ENCODE measurements at regions of chr17 and their contacts with region 1.

Region 1: DNA sequence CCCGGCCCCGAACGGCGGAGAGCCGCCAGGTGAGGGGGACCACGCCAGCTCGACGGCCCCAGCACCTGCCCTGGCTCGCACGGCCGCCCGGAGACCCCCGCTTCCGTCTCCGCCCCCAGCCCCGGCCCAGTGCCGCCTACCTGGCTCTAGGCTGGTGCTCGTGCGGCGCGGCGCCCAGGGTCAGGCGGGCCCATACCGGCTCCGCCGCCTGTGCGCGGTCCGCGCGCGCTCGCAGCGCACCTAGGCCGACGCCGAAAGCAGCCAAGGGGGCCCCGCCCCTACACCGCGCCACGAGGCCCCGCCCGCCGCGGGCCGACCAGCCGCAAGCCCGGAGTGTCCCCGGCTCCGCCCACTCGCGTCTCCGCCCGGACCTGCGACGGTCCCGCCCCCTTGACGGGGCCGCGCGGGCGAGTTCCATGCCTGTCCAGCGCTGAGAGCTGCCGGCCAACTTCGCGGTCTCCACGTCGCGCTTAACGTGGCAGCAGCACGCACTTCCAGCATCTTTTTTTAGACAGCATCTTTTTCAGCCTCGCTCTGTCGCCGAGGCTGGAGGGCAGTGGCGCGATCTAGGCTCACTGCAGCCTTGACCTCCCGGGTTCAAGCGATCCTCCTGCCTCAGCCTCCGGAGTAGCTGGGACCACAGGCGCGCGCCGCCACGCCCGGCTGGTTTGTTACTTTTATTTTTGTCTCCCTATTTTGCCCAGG is at the start of gene SLC25A39:
- DNase-seq: peak; percentile 87 to 99 (median 94)
- ATAC-seq: peak; percentile 91
- H3K4me3 ChIP-seq: peak within 1 kb of the TSS; percentile 98
- H3K4me3 Mint-ChIP-seq: peak within 1 kb of the TSS; percentile 90 to 96 (median 93)
- H3K27ac ChIP-seq: peak within 1 kb of the TSS; percentile 83
- H3K27ac Mint-ChIP-seq: peak within 1 kb of the TSS; percentile 89 to 98 (median 95)
- H3K4me1 ChIP-seq: peaks cover 13 to 17% of the 10 kb centered on the region in 2 donors
- H3K4me1 Mint-ChIP-seq: peaks cover 0 to 38% (median 19%) of the 10 kb centered on the region in 7 donors
- H3K27me3 ChIP-seq: no peaks in the 10 kb centered on the region
- H3K27me3 Mint-ChIP-seq: no peaks in the 10 kb centered on the region
- total RNA-seq, gene SLC25A39: 75.4 to 107 (median 101) TPM

Region 2: DNA sequence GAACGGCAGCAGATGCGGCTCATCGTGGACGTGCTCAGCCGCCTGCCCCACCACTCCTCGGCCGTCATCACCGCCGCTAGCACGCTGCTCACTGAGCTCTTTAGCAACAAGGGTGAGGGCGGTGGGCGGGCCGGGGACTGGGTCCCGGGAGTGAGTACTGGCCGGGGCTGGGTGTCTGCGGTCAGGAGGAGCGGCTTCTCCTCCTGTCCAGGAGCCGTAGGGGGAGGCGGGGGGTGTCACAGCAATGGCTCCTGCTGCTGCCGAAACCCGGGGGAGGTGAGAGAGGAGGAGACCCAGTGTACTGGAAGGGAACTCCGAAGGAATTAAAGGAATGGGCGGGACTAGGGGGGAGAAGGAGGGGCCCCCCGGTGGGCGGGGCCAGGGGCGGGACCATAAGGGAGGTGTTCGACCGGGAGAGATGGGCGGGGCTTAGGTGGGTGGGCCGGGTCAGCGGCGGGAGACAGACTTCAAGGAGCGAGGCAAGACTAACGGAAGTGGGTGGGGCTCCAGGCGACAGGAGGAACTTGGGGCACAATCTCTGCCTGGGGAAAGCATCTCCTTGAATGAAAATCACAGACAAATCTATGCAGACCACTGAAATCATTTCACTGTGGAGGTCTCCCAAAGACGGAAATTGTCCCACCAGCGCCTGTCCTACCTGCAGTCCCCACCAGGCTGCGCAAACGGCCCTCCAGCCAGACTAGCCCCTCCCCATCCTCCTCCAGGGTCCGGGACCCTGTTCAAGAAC is 318.0 kb before region 1 on chr17:
- CTCF ChIA-PET with region 1: no interaction called
- POLR2A ChIA-PET with region 1: no interaction called
- intact Hi-C with region 1: loop called in 1 of 2 experiments (anchors 2 kb)
- DNase-seq: peak; percentile 77 to 95 (median 86)
- ATAC-seq: peak; percentile 96
- H3K4me3 ChIP-seq: peak overlapping the region; percentile 89
- H3K4me3 Mint-ChIP-seq: peak overlapping the region; percentile 86 to 94 (median 90)
- H3K27ac ChIP-seq: peak overlapping the region; percentile 60
- H3K27ac Mint-ChIP-seq: peak overlapping the region; percentile 44 to 88 (median 68)
- H3K4me1 ChIP-seq: peaks cover 19 to 26% of the 10 kb centered on the region in 2 donors
- H3K4me1 Mint-ChIP-seq: peaks cover 16 to 30% (median 25%) of the 10 kb centered on the region in 7 donors
- H3K27me3 ChIP-seq: no peaks in the 10 kb centered on the region
- H3K27me3 Mint-ChIP-seq: peaks cover 0 to 30% (median 4%) of the 10 kb centered on the region in 5 donors

Region 3: GRCh38 chr17:44141717-44142285 is 182.9 kb before region 1 on chr17 and contains the start of gene HROB:
- CTCF ChIA-PET with region 1: no interaction called
- POLR2A ChIA-PET with region 1: no interaction called
- intact Hi-C with region 1: loop called (anchors 1 kb)
- DNase-seq: peak; percentile 96 to 100 (median 98)
- ATAC-seq: peak; percentile 98
- H3K4me3 ChIP-seq: peak within 1 kb of the TSS; percentile 84
- H3K4me3 Mint-ChIP-seq: peak within 1 kb of the TSS; percentile 82 to 89 (median 84)
- H3K27ac ChIP-seq: peak within 1 kb of the TSS; percentile 84
- H3K27ac Mint-ChIP-seq: peak within 1 kb of the TSS; percentile 65 to 91 (median 87)
- H3K4me1 ChIP-seq: peaks cover 0 to 9% of the 10 kb centered on the region in 2 donors
- H3K4me1 Mint-ChIP-seq: peaks cover 0 to 32% (median 12%) of the 10 kb centered on the region in 7 donors
- H3K27me3 ChIP-seq: no peaks in the 10 kb centered on the region
- H3K27me3 Mint-ChIP-seq: peaks cover 0 to 5% (median 0%) of the 10 kb centered on the region in 5 donors
- total RNA-seq, gene HROB: 0.76 to 12.3 (median 2.1) TPM

Region 4: GRCh38 chr17:44210342-44211192 is 114.2 kb before region 1 on chr17:
- CTCF ChIA-PET with region 1: interaction called, 47 read pairs
- POLR2A ChIA-PET with region 1: interaction called, 60 read pairs
- intact Hi-C with region 1: loop called in 1 of 2 experiments (anchors 1 kb)
- DNase-seq: peak; percentile 82 to 97 (median 93)
- ATAC-seq: peak; percentile 99
- H3K4me3 ChIP-seq: no peak overlapping the region
- H3K4me3 Mint-ChIP-seq: peak overlapping the region; percentile 16 to 77 (median 60)
- H3K27ac ChIP-seq: peak overlapping the region; percentile 68
- H3K27ac Mint-ChIP-seq: peak overlapping the region; percentile 52 to 90 (median 81)
- H3K4me1 ChIP-seq: peaks cover 25 to 47% of the 10 kb centered on the region in 2 donors
- H3K4me1 Mint-ChIP-seq: peaks cover 30 to 67% (median 50%) of the 10 kb centered on the region in 7 donors
- H3K27me3 ChIP-seq: no peaks in the 10 kb centered on the region
- H3K27me3 Mint-ChIP-seq: no peaks in the 10 kb centered on the region

Region 5: GRCh38 chr17:44308320-44308818 is 16.4 kb before region 1 on chr17 and contains the start of gene RUNDC3A:
- CTCF ChIA-PET with region 1: no interaction called
- POLR2A ChIA-PET with region 1: interaction called, 7 read pairs
- intact Hi-C with region 1: loop called (anchors 1 kb)
- DNase-seq: peak; percentile 75 to 90 (median 85)
- ATAC-seq: peak; percentile 99
- H3K4me3 ChIP-seq: no peak within 1 kb of the TSS
- H3K4me3 Mint-ChIP-seq: peak within 1 kb of the TSS; percentile 42 to 84 (median 63)
- H3K27ac ChIP-seq: no peak within 1 kb of the TSS
- H3K27ac Mint-ChIP-seq: peak within 1 kb of the TSS in 3 of 9 donors; percentile 13 to 75 (median 71)
- H3K4me1 ChIP-seq: peaks cover 0 to 5% of the 10 kb centered on the region in 2 donors
- H3K4me1 Mint-ChIP-seq: peaks cover 14 to 27% (median 15%) of the 10 kb centered on the region in 7 donors
- H3K27me3 ChIP-seq: no peaks in the 10 kb centered on the region
- H3K27me3 Mint-ChIP-seq: peaks cover 28 to 57% (median 32%) of the 10 kb centered on the region in 5 donors
- total RNA-seq, gene RUNDC3A: 0.08 to 0.22 TPM in 2 of 5 experiments, not detected in the others

Region 6: DNA sequence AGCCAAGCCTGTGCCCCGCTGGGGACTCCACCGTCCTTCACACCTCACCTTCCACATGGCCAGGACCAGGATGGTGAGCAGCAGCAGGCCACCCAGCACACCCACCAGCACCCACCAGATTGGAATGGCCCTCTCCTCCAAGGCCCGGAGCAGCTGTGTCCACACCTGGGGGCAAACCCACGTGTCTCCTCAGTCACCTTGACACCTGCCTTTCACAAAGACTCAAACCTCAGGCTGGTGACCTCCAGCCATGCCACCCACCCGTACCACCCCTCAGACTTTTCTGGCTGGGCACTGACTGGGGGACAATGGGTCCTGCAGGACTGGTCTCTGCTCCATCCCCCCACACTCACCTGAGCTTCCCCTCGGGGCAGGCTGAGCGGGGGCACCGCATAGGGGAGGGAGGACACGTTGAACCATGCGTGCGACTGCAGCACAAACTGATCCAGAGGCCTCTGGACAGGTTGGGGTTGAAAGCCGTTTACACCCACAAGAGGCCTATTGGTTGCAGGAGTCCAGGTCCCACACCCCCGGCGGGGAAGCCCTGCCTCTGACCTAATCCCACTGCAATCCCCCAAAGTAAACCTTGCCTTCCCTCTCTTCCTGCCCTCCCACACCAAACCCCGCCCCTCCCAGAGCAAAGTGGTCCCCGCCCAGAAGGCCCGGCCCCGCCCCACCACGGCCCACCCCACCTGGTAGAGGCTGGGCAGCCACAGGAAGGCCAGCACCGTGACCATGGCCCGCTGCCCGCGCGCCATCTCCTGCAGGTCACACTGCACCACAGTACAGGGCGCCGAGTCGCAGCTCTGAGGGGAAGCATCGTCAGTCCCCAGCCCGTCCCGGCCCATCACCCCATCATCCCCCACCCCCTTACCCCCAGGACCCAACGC is 49.8 kb after region 1 on chr17:
- CTCF ChIA-PET with region 1: no interaction called
- POLR2A ChIA-PET with region 1: no interaction called
- intact Hi-C with region 1: no loop called
- DNase-seq: no peak
- ATAC-seq: no peak
- H3K4me3 ChIP-seq: no peak overlapping the region
- H3K4me3 Mint-ChIP-seq: no peak overlapping the region
- H3K27ac ChIP-seq: no peak overlapping the region
- H3K27ac Mint-ChIP-seq: no peak overlapping the region
- H3K4me1 ChIP-seq: no peaks in the 10 kb centered on the region
- H3K4me1 Mint-ChIP-seq: peaks cover 0 to 4% (median 3%) of the 10 kb centered on the region in 7 donors
- H3K27me3 ChIP-seq: no peaks in the 10 kb centered on the region
- H3K27me3 Mint-ChIP-seq: peaks cover 7 to 29% (median 16%) of the 10 kb centered on the region in 5 donors

Region 7: DNA sequence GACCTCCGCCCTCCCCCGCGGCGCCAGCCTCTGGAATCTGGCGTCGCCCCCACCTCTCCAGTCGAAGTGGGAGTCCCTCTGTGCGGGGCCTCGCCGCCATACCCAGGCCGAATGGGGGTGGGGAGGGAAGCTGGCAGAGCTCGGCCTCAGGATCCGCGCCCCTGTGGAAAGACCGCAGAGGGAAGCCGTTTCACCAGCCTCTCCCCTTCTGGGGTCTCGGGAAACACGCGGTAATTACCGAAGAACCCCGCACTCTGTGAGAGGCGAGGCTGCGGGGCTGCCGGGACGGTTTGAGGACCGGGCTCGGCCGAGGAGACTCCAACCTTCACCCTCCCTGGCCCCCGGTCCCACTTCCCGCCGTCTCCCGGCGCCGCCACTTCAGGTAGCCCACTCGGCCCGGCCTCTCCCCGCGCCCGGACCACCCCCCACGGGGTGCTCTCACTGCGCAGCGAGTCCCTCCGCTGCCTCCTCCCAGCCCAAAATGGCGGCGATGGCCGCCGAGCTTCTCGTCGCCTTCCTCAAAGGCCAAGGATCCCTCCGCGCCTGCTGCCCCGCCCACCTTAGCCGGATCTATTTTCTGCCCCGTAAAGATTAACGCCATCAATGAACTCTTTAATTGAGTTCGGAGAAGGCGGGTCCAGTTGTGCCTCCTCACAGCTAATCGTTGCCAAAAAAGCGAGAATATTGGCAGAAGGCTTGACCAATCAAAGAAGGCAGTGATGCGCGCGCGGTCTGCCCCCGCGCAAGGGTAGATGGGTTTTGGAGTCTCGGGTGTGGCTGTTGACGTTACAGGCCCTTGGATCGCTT is 836.5 kb after region 1 on chr17:
- CTCF ChIA-PET with region 1: no interaction called
- POLR2A ChIA-PET with region 1: no interaction called
- intact Hi-C with region 1: loop called in 1 of 2 experiments (anchors 10 kb)
- DNase-seq: peak; percentile 89 to 100 (median 99)
- ATAC-seq: peak; percentile 93
- H3K4me3 ChIP-seq: peak overlapping the region; percentile 95
- H3K4me3 Mint-ChIP-seq: peak overlapping the region; percentile 88 to 100 (median 96)
- H3K27ac ChIP-seq: peak overlapping the region; percentile 98
- H3K27ac Mint-ChIP-seq: peak overlapping the region; percentile 97 to 100 (median 98)
- H3K4me1 ChIP-seq: peaks cover 15 to 27% of the 10 kb centered on the region in 2 donors
- H3K4me1 Mint-ChIP-seq: peaks cover 29 to 48% (median 43%) of the 10 kb centered on the region in 7 donors
- H3K27me3 ChIP-seq: no peaks in the 10 kb centered on the region
- H3K27me3 Mint-ChIP-seq: no peaks in the 10 kb centered on the region

Measured in naive thymus-derived CD4-positive, alpha-beta T cell (primary cell).